MCF 10A (cell line): ENCODE measurements at regions of chr6 and their contacts with region 1.

Region 1: DNA sequence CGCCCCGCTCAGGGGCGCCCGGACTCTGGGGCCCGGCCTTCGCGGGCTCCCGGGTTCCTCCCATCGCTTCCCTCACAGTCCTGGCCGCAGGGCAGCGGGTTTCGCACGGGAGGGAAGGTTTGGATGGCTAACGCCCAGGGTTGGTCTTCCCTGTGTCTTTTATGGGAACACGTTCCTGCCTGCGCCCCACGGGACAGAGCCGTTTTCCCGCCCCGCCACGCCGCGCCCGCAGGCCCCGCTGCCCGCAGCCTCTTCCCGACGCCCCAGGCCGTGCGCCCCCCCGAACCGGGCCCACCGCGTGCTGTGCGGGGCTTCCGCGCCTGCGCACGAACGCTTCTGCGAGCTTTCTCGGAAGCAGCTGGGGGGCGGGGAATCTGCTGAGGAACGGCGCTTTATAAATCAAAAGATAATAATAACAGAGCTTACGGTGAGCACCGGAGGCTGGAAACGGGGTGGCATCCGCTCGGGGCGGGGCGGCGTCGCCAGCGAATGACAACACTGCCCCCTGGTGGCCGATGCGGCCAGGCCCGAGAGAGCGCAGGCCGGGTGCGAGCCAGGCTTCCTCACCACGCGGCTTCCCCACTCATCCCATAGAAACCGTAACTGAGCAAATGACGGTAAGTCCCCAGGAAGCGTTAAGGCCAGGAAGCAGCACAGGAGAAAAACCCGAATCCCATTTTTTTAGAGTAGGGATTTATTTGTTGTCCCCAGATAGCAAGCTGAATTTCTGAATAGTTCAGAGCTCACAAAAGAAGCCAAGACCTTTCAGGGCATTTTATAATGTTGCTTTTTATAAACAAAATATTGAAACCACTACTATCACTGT is 116.4 kb downstream of the MYLK4 start:
- DNase-seq: peak; percentile 87
- H3K4me3 Mint-ChIP-seq: peak overlapping the region; percentile 67
- H3K27ac Mint-ChIP-seq: peak overlapping the region; percentile 80
- H3K4me1 Mint-ChIP-seq: peaks cover 40% of the 10 kb centered on the region
- H3K27me3 Mint-ChIP-seq: no peaks in the 10 kb centered on the region
- CTCF ChIP-seq: peak; percentile 95

Region 2: DNA sequence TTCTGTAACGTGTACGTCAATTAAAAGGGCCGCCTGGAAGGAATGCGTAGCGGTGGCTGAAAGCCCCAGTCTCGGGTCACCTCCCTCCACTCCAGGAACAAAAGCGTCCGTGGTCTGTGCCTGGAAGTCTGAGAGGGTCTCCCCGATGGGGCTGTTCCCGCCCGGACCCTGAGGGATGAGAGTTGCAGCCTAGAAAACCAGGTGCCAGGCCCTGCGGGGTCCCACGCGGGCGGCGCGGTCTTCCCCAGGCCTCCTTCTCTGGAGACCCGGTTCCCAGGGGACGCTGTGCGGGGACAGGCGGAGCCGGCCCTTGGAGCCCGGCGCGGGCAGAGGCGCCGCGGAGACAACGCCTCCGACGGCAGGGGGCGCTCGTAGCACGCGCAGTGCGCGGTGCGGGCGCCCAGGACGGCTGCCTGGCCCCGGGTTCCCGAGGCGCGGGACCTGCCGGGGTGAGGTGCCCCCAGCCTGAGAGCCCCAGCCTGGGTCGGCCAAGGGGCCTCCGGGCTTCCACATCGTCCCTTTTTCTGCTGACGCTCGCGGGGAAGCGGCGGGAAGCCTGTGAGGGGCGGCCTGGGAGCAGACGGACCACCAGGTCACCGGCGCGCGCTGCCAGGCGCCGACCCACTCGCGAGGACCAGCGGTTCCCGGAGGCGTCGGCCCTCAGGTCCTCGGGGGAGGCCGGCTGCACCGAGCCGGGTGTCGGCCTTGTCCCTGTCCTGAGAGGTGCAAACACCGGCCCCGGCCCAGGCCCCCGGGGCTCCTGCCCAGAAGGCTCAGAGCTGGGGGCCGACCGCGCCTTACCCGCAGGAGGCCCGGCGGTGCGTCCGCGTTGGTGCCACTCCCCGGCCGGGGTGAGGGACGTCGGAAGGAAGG is 1030.0 kb before region 1 on chr6:
- CTCF ChIA-PET with region 1: interaction called, 49 read pairs
- POLR2A ChIA-PET with region 1: no interaction called
- intact Hi-C with region 1: loop called (anchors 1 kb)
- DNase-seq: peak; percentile 66
- H3K4me3 Mint-ChIP-seq: peak overlapping the region; percentile 28
- H3K27ac Mint-ChIP-seq: no peak overlapping the region
- H3K4me1 Mint-ChIP-seq: no peaks in the 10 kb centered on the region
- H3K27me3 Mint-ChIP-seq: no peaks in the 10 kb centered on the region
- CTCF ChIP-seq: peak; percentile 97

Region 3: DNA sequence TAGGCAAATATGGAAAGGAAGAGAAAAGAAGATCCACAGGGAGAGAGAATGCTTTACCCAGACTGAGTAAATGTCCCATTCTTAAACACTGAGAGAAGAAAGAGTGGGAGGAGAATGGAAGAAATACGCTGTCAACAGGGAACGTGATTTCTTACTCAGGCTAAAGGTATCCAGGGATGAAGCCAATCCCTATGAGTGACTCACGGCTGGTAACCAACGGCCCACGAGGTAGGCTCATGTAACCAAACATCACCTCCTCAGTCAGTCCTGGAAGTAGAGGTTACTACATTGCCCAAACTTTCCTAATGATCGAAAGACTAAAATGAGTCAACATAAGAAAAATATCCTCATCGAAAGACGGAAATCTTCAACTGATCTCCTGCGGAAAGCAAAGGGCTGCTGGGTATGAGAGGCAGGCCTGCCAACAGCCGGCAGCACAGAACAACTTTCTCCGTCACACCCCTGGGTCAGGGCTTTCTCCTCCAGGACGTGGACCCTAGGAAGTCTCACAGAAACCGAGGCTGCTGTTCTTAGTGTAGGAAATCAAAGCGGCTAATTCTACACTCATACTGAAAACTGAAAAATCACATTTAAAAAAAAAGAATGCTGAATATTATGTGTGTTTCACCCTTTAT is 681.5 kb before region 1 on chr6:
- CTCF ChIA-PET with region 1: no interaction called
- POLR2A ChIA-PET with region 1: no interaction called
- intact Hi-C with region 1: loop called (anchors 2 kb)
- DNase-seq: peak; percentile 98
- H3K4me3 Mint-ChIP-seq: peak overlapping the region; percentile 68
- H3K27ac Mint-ChIP-seq: peak overlapping the region; percentile 100
- H3K4me1 Mint-ChIP-seq: peaks cover 18% of the 10 kb centered on the region
- H3K27me3 Mint-ChIP-seq: no peaks in the 10 kb centered on the region
- CTCF ChIP-seq: no peak

Region 4: GRCh38 chr6:2353412-2354137 is 280.8 kb before region 1 on chr6:
- CTCF ChIA-PET with region 1: interaction called, 6 read pairs
- POLR2A ChIA-PET with region 1: interaction called, 6 read pairs
- intact Hi-C with region 1: loop called (anchors 1 kb)
- DNase-seq: peak; percentile 82
- H3K4me3 Mint-ChIP-seq: no peak overlapping the region
- H3K27ac Mint-ChIP-seq: no peak overlapping the region
- H3K4me1 Mint-ChIP-seq: peaks cover 9% of the 10 kb centered on the region
- H3K27me3 Mint-ChIP-seq: no peaks in the 10 kb centered on the region
- CTCF ChIP-seq: peak; percentile 85

Region 5: GRCh38 chr6:2616811-2617210 is 17.5 kb before region 1 on chr6:
- CTCF ChIA-PET with region 1: interaction called, 18 read pairs
- POLR2A ChIA-PET with region 1: interaction called, 3 read pairs
- intact Hi-C with region 1: no loop called
- DNase-seq: peak; percentile 49
- H3K4me3 Mint-ChIP-seq: no peak overlapping the region
- H3K27ac Mint-ChIP-seq: no peak overlapping the region
- H3K4me1 Mint-ChIP-seq: no peaks in the 10 kb centered on the region
- H3K27me3 Mint-ChIP-seq: no peaks in the 10 kb centered on the region
- CTCF ChIP-seq: no peak

Region 6: DNA sequence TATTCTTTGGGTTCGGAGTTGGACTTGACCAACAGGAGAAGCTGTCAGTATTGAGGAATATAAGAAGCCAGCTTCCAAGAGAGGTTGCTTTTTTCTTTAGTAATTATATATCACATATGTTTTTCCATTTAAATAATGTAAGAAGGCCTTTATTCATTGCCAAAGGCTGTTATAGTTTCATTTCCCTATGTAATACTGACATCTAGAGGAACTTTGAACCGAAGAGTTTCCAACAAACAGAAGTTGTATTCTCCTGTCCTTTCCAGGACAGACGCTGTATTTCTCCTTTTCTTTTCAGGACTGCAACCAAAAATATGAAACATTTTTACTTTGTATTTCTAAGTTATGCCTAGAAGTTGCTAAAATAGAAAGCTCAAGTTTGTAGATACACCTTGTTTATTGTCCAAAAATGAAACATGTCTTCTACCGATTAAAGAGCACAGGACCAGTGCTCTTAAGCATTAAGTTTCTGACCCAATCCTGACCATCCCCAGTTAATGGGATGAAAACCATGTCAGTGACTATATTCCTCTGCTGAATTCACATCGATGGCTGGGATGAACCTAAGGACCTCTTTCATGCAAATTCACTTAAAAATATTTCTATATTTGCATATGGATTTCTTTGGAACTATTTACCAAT is 61.2 kb after region 1 on chr6:
- CTCF ChIA-PET with region 1: interaction called, 6 read pairs
- POLR2A ChIA-PET with region 1: no interaction called
- intact Hi-C with region 1: loop called (anchors 2 kb)
- DNase-seq: peak; percentile 43
- H3K4me3 Mint-ChIP-seq: no peak overlapping the region
- H3K27ac Mint-ChIP-seq: no peak overlapping the region
- H3K4me1 Mint-ChIP-seq: no peaks in the 10 kb centered on the region
- H3K27me3 Mint-ChIP-seq: no peaks in the 10 kb centered on the region
- CTCF ChIP-seq: peak; percentile 64

Region 7: GRCh38 chr6:2818593-2818992 is 184.2 kb after region 1 on chr6:
- CTCF ChIA-PET with region 1: no interaction called
- POLR2A ChIA-PET with region 1: no interaction called
- intact Hi-C with region 1: no loop called
- DNase-seq: no peak
- H3K4me3 Mint-ChIP-seq: no peak overlapping the region
- H3K27ac Mint-ChIP-seq: peak overlapping the region; percentile 90
- H3K4me1 Mint-ChIP-seq: peaks cover 28% of the 10 kb centered on the region
- H3K27me3 Mint-ChIP-seq: no peaks in the 10 kb centered on the region
- CTCF ChIP-seq: no peak